A549 (cell line): ENCODE measurements at regions of chr1 and their contacts with region 1.

Region 1: DNA sequence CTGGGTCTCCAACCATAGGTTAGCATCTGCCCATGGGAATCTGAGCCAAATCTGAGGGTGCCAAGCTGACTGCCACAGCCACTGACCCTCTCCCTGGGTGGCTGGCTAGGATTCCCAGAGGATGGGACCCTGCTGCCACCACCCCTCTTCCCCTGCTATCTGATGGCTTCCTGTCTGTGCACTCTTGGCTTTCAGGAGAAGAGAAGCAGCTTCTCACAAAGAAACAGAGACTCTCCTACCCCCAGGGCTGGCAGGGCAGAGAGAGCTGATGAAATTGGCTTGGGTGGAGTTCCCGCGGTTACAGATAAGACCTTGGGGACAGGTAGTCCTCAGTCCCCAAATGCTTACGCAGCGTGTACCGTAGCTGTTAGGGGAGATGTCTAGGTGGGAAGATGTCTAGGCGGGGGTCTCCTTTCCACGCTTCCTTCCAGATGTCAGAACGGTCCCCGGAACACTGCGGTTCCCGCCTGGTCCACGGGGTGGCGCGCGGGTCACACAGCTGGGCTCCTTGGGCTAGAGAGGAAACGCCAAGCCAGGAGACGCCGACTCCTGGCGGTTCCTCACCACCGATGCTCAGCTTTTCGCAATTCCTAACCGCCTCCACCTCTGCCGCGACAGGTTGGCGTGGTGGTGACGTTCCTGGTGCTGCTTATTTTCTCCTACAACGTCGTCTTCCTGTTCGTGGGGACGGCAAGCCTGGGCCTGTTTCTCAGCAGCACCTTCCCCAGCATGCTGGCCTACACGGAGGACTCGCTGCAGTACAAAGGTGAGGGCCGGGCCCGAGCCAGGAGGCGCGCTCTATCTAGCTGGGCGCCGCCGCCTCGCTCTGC is 40.1 kb downstream of the ELK4 start:
- DNase-seq: peak; percentile 81 to 89
- ATAC-seq: peak; percentile 92
- H3K4me3 ChIP-seq: peak overlapping the region; percentile 37
- H3K27ac ChIP-seq: peak overlapping the region; percentile 64 to 72
- H3K4me1 ChIP-seq: peaks cover 3% of the 10 kb centered on the region; the same call in 1 of the 3 replicates
- CTCF ChIP-seq: peak; percentile 95
- EP300 ChIP-seq: no peak
- POLR2A ChIP-seq: no peak
- RAD21 ChIP-seq: peak; percentile 97 to 98

Region 2: GRCh38 chr1:205536759-205537361 is 54.9 kb before region 1 on chr1:
- CTCF ChIA-PET with region 1: interaction called, 12 read pairs
- POLR2A ChIA-PET with region 1: no interaction called
- DNase-seq: no peak
- ATAC-seq: peak in 1 of 2 experiments; percentile 15; a peak in 2 of 6 replicates
- H3K4me3 ChIP-seq: no peak overlapping the region
- H3K27ac ChIP-seq: no peak overlapping the region
- H3K4me1 ChIP-seq: peaks cover 7% of the 10 kb centered on the region; the same call in 1 of the 3 replicates
- CTCF ChIP-seq: no peak
- EP300 ChIP-seq: no peak
- POLR2A ChIP-seq: no peak
- RAD21 ChIP-seq: no peak

Region 3: GRCh38 chr1:205610901-205611466 is 19.2 kb after region 1 on chr1:
- CTCF ChIA-PET with region 1: interaction called, 20 read pairs
- POLR2A ChIA-PET with region 1: no interaction called
- DNase-seq: no peak
- ATAC-seq: no peak
- H3K4me3 ChIP-seq: no peak overlapping the region
- H3K27ac ChIP-seq: no peak overlapping the region
- H3K4me1 ChIP-seq: peaks cover 9% of the 10 kb centered on the region
- CTCF ChIP-seq: no peak
- EP300 ChIP-seq: no peak
- POLR2A ChIP-seq: no peak
- RAD21 ChIP-seq: no peak

Region 4: DNA sequence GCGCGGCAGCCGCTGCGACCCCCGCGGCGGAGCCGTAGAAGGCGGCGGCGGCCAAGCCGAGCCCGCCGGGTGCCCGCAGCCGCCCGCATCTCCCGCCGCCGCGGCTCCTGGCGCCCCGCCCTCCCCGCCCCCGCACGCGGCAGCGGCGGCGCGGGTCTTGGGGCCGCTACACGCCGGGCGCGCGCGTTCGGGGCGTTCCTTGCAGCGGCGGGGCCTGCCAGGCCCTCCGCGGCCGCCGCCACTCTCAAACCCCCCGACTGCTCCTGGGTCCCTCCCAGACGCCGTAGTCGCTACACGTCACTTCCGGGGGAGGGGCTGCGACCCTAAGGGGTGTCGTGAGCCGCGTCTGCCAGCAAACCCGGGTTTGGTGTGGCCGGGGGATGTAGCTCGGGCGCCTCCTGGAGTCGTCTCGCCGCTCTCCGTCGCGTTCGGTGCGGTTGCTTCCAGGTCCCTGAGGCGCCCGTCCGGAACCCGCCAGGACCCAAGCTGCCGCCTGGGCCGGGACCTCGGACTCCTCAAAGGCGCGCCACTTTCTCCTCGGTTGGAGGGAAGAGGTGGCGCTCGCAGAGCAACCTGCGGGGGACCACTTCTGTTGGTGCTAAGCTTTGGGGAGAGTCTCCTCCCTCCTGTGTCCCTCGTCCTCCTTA is 40.1 kb after region 1 on chr1 and contains the start of gene ELK4:
- CTCF ChIA-PET with region 1: interaction called, 227 read pairs
- POLR2A ChIA-PET with region 1: interaction called, 26 read pairs
- DNase-seq: peak; percentile 94 to 98
- ATAC-seq: peak; percentile 91 to 94
- H3K4me3 ChIP-seq: peak within 1 kb of the TSS; percentile 91
- H3K27ac ChIP-seq: peak within 1 kb of the TSS; percentile 99
- H3K4me1 ChIP-seq: peaks cover 15% of the 10 kb centered on the region; the same call in 2 of the 3 replicates
- CTCF ChIP-seq: peak; percentile 57
- EP300 ChIP-seq: no peak
- POLR2A ChIP-seq: peak; percentile 94
- RAD21 ChIP-seq: peak; percentile 76 to 79
- polyA plus RNA-seq, gene ELK4: 11.9 and 12.7 TPM in 2 replicates

Region 5: DNA sequence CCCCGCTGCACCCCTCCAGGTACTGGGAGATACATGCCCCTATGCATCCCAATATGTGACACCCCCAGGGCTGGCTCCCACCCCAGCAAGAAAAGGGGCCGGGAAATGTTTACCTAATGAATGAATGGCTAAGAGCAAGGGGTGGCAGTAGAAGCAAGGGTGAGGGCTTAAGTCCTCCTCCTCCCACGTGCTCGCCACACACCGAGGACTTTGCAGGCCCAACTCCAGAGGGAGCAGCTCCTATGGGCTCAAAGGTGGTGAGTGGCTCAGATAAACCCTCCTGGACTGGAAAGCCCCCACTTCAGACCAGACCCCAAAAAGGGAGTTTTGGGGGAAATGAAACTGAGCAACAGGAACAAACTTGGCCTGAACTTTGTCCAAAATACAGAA is 77.2 kb after region 1 on chr1:
- CTCF ChIA-PET with region 1: interaction called, 423 read pairs
- POLR2A ChIA-PET with region 1: no interaction called
- DNase-seq: no peak
- ATAC-seq: 0 out of 6 replicates have a peak, but pooled peaks of 1 of the 2 experiments have one; percentile 29
- H3K4me3 ChIP-seq: no peak overlapping the region
- H3K27ac ChIP-seq: peak overlapping the region in 1 of 2 experiments; percentile 56; a peak in 3 of 6 replicates
- H3K4me1 ChIP-seq: peaks cover 20% of the 10 kb centered on the region; the same call in 2 of the 3 replicates
- CTCF ChIP-seq: no peak
- EP300 ChIP-seq: no peak
- POLR2A ChIP-seq: no peak
- RAD21 ChIP-seq: no peak